Transverse colon (tissue), 4 donors: ENCODE measurements at regions of chr6 and their contacts with region 1.

Region 1: DNA sequence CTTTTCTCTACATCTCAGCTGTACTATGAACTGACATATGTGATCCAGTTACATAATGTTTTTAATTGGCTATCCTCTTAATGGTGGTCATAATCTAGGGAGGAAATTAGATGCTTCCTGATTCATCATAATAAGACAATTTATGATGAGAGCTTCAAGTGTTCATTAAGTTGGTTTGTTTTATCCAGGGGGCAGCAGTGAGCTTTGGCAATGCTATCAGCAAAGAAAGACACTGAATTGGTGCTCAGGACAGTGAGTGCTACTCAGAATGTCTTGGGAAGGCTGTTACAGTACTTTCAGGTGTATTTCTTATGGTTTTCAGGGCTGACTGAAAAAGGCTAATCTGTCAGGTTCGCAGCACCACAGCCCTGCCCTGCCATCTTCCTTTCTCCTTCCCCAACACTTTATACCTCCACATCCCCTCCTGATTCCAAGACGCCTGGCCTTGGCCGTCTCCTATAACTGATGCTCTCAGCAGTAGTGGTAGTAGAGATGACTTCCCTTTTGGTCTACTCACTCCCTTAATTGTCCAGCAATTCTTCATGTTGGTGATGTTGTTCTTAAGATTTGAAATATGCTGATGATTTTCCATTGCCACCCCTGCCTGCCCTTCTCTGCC is 67.0 kb upstream of the TNFAIP3 start:
- DNase-seq: peak; percentile 44
- H3K4me3 ChIP-seq: no peak overlapping the region
- H3K27ac ChIP-seq: peak overlapping the region in 2 of 4 donors; percentile 14 to 49
- H3K4me1 ChIP-seq: peaks cover 0 to 41% (median 7%) of the 10 kb centered on the region in 4 donors
- H3K27me3 ChIP-seq: no peaks in the 10 kb centered on the region
- CTCF ChIP-seq: peak; percentile 39 to 55 (median 49)
- EP300 ChIP-seq: no peak
- POLR2A ChIP-seq: no peak

Region 2: GRCh38 chr6:137736048-137736818 is 63.8 kb before region 1 on chr6:
- in situ Hi-C with region 1: no loop called
- intact Hi-C with region 1: no loop called
- DNase-seq: no peak
- H3K4me3 ChIP-seq: no peak overlapping the region
- H3K27ac ChIP-seq: no peak overlapping the region
- H3K4me1 ChIP-seq: peaks cover 0 to 32% (median 6%) of the 10 kb centered on the region in 4 donors
- H3K27me3 ChIP-seq: no peaks in the 10 kb centered on the region
- CTCF ChIP-seq: no peak
- EP300 ChIP-seq: no peak
- POLR2A ChIP-seq: no peak

Region 3: DNA sequence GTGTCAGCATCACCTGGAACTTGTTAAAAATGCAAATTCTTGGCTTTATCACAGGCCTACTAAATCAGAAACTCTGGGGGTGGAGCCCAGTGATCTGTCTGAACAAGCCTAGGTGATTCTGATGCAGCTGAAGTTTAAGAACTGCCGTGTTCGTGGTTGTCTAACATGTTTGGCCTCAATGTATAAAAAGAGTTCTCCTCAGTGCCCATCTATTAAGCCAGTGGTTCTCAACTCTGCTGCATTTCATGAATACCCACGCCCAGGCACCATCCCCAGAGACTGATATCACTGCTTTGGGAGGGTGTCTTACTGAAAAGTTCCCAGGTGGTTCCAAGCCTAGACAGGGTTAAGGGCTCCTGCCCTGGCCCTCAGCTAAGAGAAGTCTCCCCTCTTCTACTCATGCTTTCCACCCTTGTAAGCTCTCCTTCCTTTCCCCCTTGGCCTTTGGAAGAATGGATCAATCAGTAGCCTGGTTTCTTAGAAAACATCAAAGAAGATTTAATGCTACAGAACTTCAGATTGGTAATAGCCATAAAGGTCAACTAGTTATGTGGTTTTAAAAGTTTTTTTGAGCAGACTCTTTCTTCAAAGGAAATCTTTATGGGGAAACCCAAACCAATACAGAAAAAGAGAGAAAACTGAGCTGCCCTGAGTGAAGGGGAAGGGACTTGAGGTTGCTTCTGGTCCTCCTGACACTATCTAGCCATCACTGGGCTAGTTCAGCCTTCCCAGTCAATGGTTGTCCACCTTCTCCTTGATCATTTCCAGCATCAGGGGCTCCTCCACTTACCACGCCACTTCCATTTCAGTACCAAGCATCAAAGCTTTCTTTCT is 28.1 kb after region 1 on chr6:
- in situ Hi-C with region 1: no loop called
- intact Hi-C with region 1: no loop called
- DNase-seq: no peak
- H3K4me3 ChIP-seq: no peak overlapping the region
- H3K27ac ChIP-seq: no peak overlapping the region
- H3K4me1 ChIP-seq: peaks cover 0 to 6% (median 2%) of the 10 kb centered on the region in 4 donors
- H3K27me3 ChIP-seq: no peaks in the 10 kb centered on the region
- CTCF ChIP-seq: no peak
- EP300 ChIP-seq: no peak
- POLR2A ChIP-seq: no peak

Region 4: DNA sequence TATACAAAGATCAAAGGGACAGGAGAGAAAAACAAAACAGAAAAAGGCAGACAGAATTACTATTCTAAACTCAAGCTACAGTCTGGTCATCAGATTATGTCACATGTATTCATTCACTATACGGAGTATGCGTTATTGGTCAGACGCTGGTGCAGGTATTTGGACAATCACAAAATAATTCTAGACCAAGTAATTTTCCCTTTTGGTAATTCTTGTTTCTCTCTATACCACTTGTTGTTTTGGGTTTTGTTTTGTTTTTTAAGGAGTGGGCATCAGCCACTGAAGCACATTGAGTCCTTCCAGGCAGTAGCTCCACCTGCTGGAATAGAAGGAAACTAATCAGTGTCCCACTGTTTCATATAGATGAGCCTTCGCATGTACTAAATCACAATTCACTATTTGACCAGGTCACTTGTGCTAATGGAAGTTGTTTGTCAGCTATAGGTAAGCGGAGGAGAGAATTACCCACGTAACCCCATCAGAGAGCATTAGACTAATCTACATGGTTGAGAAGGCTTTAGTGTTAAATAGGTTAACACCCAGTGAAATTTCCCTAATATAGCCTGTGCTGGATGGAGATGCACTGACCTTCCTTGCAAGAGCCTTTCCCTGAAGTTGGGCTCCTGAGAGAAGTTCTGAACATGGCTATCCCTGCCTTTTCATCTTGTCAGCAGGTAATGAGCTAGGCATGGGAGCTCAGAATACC is 144.9 kb after region 1 on chr6:
- in situ Hi-C with region 1: loop called in 1 of 4 experiments (anchors 10 kb)
- intact Hi-C with region 1: no loop called
- DNase-seq: no peak
- H3K4me3 ChIP-seq: no peak overlapping the region
- H3K27ac ChIP-seq: no peak overlapping the region
- H3K4me1 ChIP-seq: no peaks in the 10 kb centered on the region
- H3K27me3 ChIP-seq: no peaks in the 10 kb centered on the region
- CTCF ChIP-seq: peak; percentile 64 to 77 (median 73)
- EP300 ChIP-seq: no peak
- POLR2A ChIP-seq: no peak

Region 5: DNA sequence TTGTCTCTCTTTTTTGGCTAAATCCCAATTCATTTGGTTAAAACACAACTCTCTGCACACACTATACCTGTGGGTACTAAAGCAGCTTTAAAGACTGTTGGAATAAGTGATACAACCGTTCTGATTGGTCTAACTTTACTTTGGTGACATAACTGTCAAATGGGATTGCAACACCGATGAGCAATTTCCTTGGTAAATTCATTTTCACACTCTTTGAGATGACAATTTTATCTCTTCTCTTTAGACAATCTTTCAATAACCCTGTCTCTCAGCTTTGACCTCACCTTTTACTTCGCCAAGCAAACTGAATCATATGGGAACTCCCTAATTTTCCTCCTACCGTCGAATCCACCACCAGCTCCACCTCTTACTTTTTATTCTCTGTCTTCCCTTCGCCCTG is 1056.6 kb after region 1 on chr6:
- in situ Hi-C with region 1: no loop called
- intact Hi-C with region 1: no loop called
- DNase-seq: no peak
- H3K4me3 ChIP-seq: no peak overlapping the region
- H3K27ac ChIP-seq: no peak overlapping the region
- H3K4me1 ChIP-seq: no peaks in the 10 kb centered on the region
- H3K27me3 ChIP-seq: no peaks in the 10 kb centered on the region
- CTCF ChIP-seq: no peak
- EP300 ChIP-seq: no peak
- POLR2A ChIP-seq: no peak